Prostate gland (tissue), 2 donors: ENCODE measurements at regions of chr9 and their contacts with region 1.

Region 1: GRCh38 chr9:6055213-6055612 is 39.8 kb upstream of the RANBP6 start:
- DNase-seq: peak; percentile 79
- H3K4me3 ChIP-seq: no peak overlapping the region
- H3K27ac ChIP-seq: no peak overlapping the region
- H3K4me1 ChIP-seq: no peaks in the 10 kb centered on the region
- H3K27me3 ChIP-seq: no peaks in the 10 kb centered on the region
- CTCF ChIP-seq: peak; percentile 36 to 86 (median 77)
- POLR2A ChIP-seq: no peak

Region 2: DNA sequence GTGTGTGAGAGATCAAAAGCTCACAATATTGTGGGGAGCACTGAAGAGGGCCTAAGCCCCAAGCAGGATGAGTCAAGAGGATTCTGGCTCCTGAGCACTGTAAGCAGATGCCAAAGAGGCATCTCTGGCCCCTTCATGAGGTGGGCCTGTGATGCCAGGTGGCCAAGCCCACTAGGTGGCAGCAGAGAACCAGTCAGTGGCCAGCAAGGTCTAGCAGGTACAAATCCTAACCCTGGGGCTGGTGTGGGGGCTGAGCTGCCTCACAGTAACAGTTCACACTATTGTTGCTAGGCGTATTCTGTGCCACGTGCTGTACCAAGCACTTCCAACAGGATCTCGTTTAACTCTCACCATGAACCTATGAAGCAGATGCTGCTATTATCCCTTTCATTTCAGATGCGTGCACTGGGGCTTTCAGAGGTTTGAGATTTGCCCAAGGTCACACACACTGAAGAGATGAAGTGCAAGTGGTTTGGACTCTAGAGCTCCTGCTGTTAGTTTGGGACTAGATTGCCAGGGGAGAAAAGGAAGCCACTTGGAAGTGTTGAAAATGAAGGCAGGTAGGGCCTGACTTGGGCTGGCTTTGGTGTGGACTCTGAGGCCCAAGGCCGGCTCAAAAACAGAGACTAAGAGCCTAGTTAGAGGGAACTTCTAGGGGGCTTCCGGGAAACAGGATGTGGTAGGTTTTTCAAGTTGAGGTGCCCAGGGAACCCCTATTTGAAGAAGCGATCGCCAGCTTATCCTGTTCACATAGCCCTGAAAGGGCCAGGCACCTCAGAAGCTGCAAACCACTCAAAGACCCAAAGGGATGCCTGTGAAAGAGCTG is 168.9 kb before region 1 on chr9:
- intact Hi-C with region 1: loop called (anchors 2 kb)
- DNase-seq: peak; percentile 65
- H3K4me3 ChIP-seq: no peak overlapping the region
- H3K27ac ChIP-seq: no peak overlapping the region
- H3K4me1 ChIP-seq: no peaks in the 10 kb centered on the region
- H3K27me3 ChIP-seq: no peaks in the 10 kb centered on the region
- CTCF ChIP-seq: peak; percentile 47 to 80 (median 77)
- POLR2A ChIP-seq: no peak

Region 3: GRCh38 chr9:5939530-5939929 is 115.7 kb before region 1 on chr9:
- intact Hi-C with region 1: no loop called
- DNase-seq: no peak
- H3K4me3 ChIP-seq: no peak overlapping the region
- H3K27ac ChIP-seq: no peak overlapping the region
- H3K4me1 ChIP-seq: no peaks in the 10 kb centered on the region
- H3K27me3 ChIP-seq: no peaks in the 10 kb centered on the region
- CTCF ChIP-seq: no peak
- POLR2A ChIP-seq: no peak

Region 4: GRCh38 chr9:6126374-6126773 is 71.2 kb after region 1 on chr9:
- intact Hi-C with region 1: no loop called
- DNase-seq: no peak
- H3K4me3 ChIP-seq: no peak overlapping the region
- H3K27ac ChIP-seq: no peak overlapping the region
- H3K4me1 ChIP-seq: no peaks in the 10 kb centered on the region
- H3K27me3 ChIP-seq: no peaks in the 10 kb centered on the region
- CTCF ChIP-seq: no peak
- POLR2A ChIP-seq: no peak

Region 5: GRCh38 chr9:6171667-6172066 is 116.5 kb after region 1 on chr9:
- intact Hi-C with region 1: no loop called
- DNase-seq: no peak
- H3K4me3 ChIP-seq: no peak overlapping the region
- H3K27ac ChIP-seq: no peak overlapping the region
- H3K4me1 ChIP-seq: no peaks in the 10 kb centered on the region
- H3K27me3 ChIP-seq: no peaks in the 10 kb centered on the region
- CTCF ChIP-seq: no peak
- POLR2A ChIP-seq: no peak

Region 6: GRCh38 chr9:6194934-6195333 is 139.7 kb after region 1 on chr9:
- intact Hi-C with region 1: no loop called
- DNase-seq: no peak
- H3K4me3 ChIP-seq: no peak overlapping the region
- H3K27ac ChIP-seq: no peak overlapping the region
- H3K4me1 ChIP-seq: no peaks in the 10 kb centered on the region
- H3K27me3 ChIP-seq: no peaks in the 10 kb centered on the region
- CTCF ChIP-seq: no peak
- POLR2A ChIP-seq: no peak

Region 7: GRCh38 chr9:6305954-6306563 is 250.8 kb after region 1 on chr9:
- intact Hi-C with region 1: loop called (anchors 2 kb)
- DNase-seq: no peak
- H3K4me3 ChIP-seq: no peak overlapping the region
- H3K27ac ChIP-seq: no peak overlapping the region
- H3K4me1 ChIP-seq: no peaks in the 10 kb centered on the region
- H3K27me3 ChIP-seq: no peaks in the 10 kb centered on the region
- CTCF ChIP-seq: peak in 3 of 4 experiments; percentile 58 to 75 (median 72)
- POLR2A ChIP-seq: no peak